CD8-positive, alpha-beta T cell (primary cell): ENCODE measurements at regions of chr3 and their contacts with region 1.

Region 1: GRCh38 chr3:46538803-46539442 is 27.2 kb downstream of the LRRC2 start:
- DNase-seq: peak; percentile 77 to 97 (median 89)
- ATAC-seq: peak; percentile 90
- H3K4me3 ChIP-seq: peak overlapping the region; percentile 30 to 33
- H3K4me3 Mint-ChIP-seq: peak overlapping the region; percentile 68
- H3K27ac ChIP-seq: peak overlapping the region; percentile 67 to 78
- H3K27ac Mint-ChIP-seq: peak overlapping the region; percentile 95
- H3K4me1 ChIP-seq: peaks cover 29% of the 10 kb centered on the region
- H3K4me1 Mint-ChIP-seq: peaks cover 54% of the 10 kb centered on the region
- H3K27me3 ChIP-seq: no peaks in the 10 kb centered on the region
- H3K27me3 Mint-ChIP-seq: no peaks in the 10 kb centered on the region
- CTCF ChIP-seq: no peak

Region 2: DNA sequence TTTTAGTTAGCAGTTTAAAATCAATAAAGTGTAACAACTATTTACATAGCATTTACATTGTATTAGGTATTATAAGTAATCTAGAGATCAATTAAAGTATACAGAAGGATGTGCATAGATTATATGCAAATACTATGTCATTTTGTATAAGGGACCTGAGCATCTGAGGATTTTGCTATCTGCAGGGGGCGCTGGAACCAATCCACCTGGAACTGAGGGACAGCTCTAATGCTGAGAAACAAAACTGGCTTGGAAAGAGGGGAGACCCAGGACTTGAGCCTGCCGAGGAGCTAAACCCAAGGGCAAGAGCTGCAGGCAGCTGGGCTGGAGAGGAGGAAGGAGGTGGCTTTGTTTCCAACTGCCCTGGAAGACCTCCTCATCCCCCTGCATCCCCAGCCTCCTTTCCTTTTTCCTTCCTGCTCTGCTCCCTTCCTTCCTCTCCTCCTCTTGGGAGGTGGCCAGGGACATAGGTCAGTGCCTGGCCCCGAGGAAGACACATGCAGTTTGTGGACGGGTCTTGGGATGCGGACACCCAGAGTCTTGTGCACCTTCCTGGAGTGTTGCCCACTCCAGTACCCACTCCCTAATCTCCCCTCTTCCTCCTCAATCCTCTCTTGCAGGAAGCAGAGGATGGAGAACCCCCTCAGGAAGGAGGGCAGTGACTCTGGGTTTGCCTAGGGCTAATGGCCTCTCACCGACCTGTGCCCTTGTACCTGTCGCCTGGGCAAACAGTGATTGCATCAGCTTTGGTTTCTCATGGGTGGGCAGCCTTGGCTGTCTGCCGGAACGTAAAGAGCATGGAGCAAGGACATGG is 42.0 kb before region 1 on chr3:
- CTCF ChIA-PET with region 1: interaction called, 6 read pairs
- POLR2A ChIA-PET with region 1: interaction called, 4 read pairs
- intact Hi-C with region 1: loop called in 1 of 2 experiments (anchors 5 kb)
- DNase-seq: peak; percentile 20 to 71 (median 61)
- ATAC-seq: peak; percentile 61
- H3K4me3 ChIP-seq: no peak overlapping the region
- H3K4me3 Mint-ChIP-seq: no peak overlapping the region
- H3K27ac ChIP-seq: no peak overlapping the region
- H3K27ac Mint-ChIP-seq: no peak overlapping the region
- H3K4me1 ChIP-seq: no peaks in the 10 kb centered on the region
- H3K4me1 Mint-ChIP-seq: peaks cover 7% of the 10 kb centered on the region
- H3K27me3 ChIP-seq: no peaks in the 10 kb centered on the region
- H3K27me3 Mint-ChIP-seq: no peaks in the 10 kb centered on the region
- CTCF ChIP-seq: peak; percentile 50

Region 3: DNA sequence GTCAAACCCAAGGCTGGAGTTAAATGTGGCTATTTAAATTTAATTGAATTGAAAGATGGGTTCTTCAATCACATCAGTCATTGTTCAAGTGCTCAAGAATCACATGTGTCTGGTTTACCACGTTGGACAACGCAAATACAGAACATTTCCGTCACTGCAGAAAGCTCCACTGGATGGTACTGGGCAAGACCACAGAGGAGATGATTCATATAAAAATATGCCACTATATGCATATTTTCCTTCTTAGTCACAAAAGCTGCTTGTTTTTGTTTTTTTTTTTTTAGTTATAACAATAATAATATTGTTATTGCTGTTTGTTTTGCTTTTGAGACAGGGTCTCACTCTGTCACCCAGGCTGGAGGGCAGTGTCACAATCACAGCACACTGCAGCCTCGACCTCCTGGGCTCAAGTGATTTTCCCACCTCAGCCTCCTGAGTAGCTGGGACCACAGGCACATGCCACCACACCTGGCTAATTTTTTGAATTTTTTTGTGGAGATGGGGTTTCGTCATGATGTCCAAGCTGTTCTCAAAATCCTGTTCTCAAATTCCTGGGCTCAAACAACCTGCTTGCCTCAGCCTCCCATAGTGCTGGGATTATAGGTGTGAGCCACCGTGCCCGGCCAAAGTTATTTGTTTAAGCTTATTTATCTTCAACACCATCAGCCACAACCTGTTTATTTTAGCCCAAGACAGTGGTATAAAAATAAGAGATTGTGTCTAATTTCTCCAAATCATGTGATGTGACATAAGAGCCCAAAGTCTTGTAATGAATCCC is 21.7 kb before region 1 on chr3:
- CTCF ChIA-PET with region 1: no interaction called
- POLR2A ChIA-PET with region 1: no interaction called
- intact Hi-C with region 1: loop called (anchors 2 kb)
- DNase-seq: peak in 1 of 9 experiments; percentile 15
- ATAC-seq: no peak
- H3K4me3 ChIP-seq: no peak overlapping the region
- H3K4me3 Mint-ChIP-seq: no peak overlapping the region
- H3K27ac ChIP-seq: no peak overlapping the region
- H3K27ac Mint-ChIP-seq: no peak overlapping the region
- H3K4me1 ChIP-seq: no peaks in the 10 kb centered on the region
- H3K4me1 Mint-ChIP-seq: no peaks in the 10 kb centered on the region
- H3K27me3 ChIP-seq: no peaks in the 10 kb centered on the region
- H3K27me3 Mint-ChIP-seq: peaks cover 3% of the 10 kb centered on the region
- CTCF ChIP-seq: no peak

Region 4: GRCh38 chr3:46549408-46549904 is 10.5 kb after region 1 on chr3:
- CTCF ChIA-PET with region 1: interaction called, 11 read pairs
- POLR2A ChIA-PET with region 1: interaction called, 6 read pairs
- intact Hi-C with region 1: loop called in 1 of 2 experiments (anchors 1 kb)
- DNase-seq: no peak
- ATAC-seq: no peak
- H3K4me3 ChIP-seq: no peak overlapping the region
- H3K4me3 Mint-ChIP-seq: no peak overlapping the region
- H3K27ac ChIP-seq: no peak overlapping the region
- H3K27ac Mint-ChIP-seq: no peak overlapping the region
- H3K4me1 ChIP-seq: peaks cover 5% of the 10 kb centered on the region
- H3K4me1 Mint-ChIP-seq: peaks cover 16% of the 10 kb centered on the region
- H3K27me3 ChIP-seq: peaks cover 0 to 2% of the 10 kb centered on the region in 2 experiments
- H3K27me3 Mint-ChIP-seq: no peaks in the 10 kb centered on the region
- CTCF ChIP-seq: no peak

Region 5: GRCh38 chr3:46558184-46559043 is 19.5 kb after region 1 on chr3:
- CTCF ChIA-PET with region 1: interaction called, 46 read pairs
- POLR2A ChIA-PET with region 1: interaction called, 11 read pairs
- intact Hi-C with region 1: loop called (anchors 1 kb)
- DNase-seq: peak; percentile 37 to 89 (median 76)
- ATAC-seq: peak; percentile 97
- H3K4me3 ChIP-seq: peak overlapping the region; percentile 13 to 41
- H3K4me3 Mint-ChIP-seq: peak overlapping the region; percentile 80
- H3K27ac ChIP-seq: no peak overlapping the region
- H3K27ac Mint-ChIP-seq: peak overlapping the region; percentile 80
- H3K4me1 ChIP-seq: peaks cover 5% of the 10 kb centered on the region
- H3K4me1 Mint-ChIP-seq: peaks cover 17% of the 10 kb centered on the region
- H3K27me3 ChIP-seq: no peaks in the 10 kb centered on the region
- H3K27me3 Mint-ChIP-seq: no peaks in the 10 kb centered on the region
- CTCF ChIP-seq: peak; percentile 97

Region 6: DNA sequence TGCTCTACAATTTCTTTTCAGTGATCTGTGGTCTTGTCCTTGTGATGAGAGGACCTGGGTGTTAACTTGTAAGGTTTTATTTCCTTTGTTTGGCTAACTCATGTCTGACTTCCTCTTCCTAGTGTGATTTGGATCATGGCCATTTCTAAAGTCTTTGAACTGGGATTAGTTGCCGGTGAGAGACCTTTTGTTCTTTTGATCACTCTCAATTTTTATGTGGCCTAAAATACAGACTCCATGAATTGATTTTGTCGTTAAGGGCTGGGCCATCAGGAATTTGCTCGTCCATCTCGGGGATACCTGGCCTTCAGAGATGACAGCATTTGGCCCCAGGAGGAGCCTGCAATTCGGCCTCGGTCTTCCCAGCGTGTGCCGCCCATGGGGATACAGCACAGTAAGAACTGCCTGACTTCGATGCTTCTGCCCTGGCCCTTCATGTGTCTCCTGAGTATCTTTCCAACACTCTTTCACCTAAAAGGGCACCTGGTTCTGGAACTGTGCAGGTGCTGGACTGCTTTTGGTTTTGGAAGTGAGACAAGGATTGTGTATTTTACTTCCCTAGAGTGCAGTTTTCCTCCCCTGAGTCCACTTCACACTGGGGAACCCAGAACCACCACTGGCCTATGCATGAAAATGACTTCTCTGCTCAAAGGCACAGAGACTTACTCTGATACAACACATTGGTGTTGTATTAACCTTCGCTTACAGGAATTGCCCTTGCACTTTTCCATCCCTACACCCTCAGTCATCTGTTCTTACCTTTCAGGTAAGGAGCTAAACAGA is 40.2 kb after region 1 on chr3:
- CTCF ChIA-PET with region 1: no interaction called
- POLR2A ChIA-PET with region 1: no interaction called
- intact Hi-C with region 1: no loop called
- DNase-seq: no peak
- ATAC-seq: no peak
- H3K4me3 ChIP-seq: no peak overlapping the region
- H3K4me3 Mint-ChIP-seq: no peak overlapping the region
- H3K27ac ChIP-seq: no peak overlapping the region
- H3K27ac Mint-ChIP-seq: no peak overlapping the region
- H3K4me1 ChIP-seq: peaks cover 6% of the 10 kb centered on the region
- H3K4me1 Mint-ChIP-seq: peaks cover 7% of the 10 kb centered on the region
- H3K27me3 ChIP-seq: no peaks in the 10 kb centered on the region
- H3K27me3 Mint-ChIP-seq: peaks cover 5% of the 10 kb centered on the region
- CTCF ChIP-seq: no peak

Region 7: GRCh38 chr3:48135552-48136495 is 1596.9 kb after region 1 on chr3:
- CTCF ChIA-PET with region 1: no interaction called
- POLR2A ChIA-PET with region 1: no interaction called
- intact Hi-C with region 1: no loop called
- DNase-seq: no peak
- ATAC-seq: no peak
- H3K4me3 ChIP-seq: no peak overlapping the region
- H3K4me3 Mint-ChIP-seq: no peak overlapping the region
- H3K27ac ChIP-seq: no peak overlapping the region
- H3K27ac Mint-ChIP-seq: no peak overlapping the region
- H3K4me1 ChIP-seq: no peaks in the 10 kb centered on the region
- H3K4me1 Mint-ChIP-seq: no peaks in the 10 kb centered on the region
- H3K27me3 ChIP-seq: no peaks in the 10 kb centered on the region
- H3K27me3 Mint-ChIP-seq: no peaks in the 10 kb centered on the region
- CTCF ChIP-seq: no peak